AG04450 (cell line): ENCODE measurements at regions of chr11 and their contacts with region 1.

Region 1: GRCh38 chr11:26063915-26064314 is 268.0 kb upstream of the ANO3 start:
- DNase-seq: no peak
- H3K4me3 ChIP-seq: no peak overlapping the region
- H3K27ac ChIP-seq: no peak overlapping the region
- H3K27me3 ChIP-seq: no peaks in the 10 kb centered on the region
- CTCF ChIP-seq: no peak

Region 2: DNA sequence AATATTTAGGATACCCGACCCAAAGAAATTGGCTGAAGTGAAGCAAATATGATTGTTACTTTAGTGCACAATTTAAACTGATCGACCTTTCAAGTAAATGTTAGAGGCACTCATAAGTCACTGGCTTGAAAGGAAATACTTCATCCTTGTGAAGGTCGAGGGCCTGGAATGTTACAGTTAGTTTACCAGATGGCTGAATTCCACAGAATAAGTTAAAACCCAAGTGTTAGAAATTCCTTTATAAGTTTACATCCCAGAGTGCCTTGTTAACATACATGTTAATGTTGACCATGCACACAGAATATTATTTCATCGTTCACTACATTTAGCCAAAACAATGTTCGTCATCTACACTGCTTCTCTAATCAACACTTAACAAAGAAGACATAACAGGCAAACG is 32.5 kb after region 1 on chr11:
- CTCF ChIA-PET with region 1: interaction called, 14 read pairs
- POLR2A ChIA-PET with region 1: no interaction called
- DNase-seq: no peak
- H3K4me3 ChIP-seq: no peak overlapping the region
- H3K27ac ChIP-seq: no peak overlapping the region
- H3K27me3 ChIP-seq: no peaks in the 10 kb centered on the region
- CTCF ChIP-seq: no peak